HAP-1 (cell line): ENCODE measurements at regions of chr7 and their contacts with region 1.

Region 1: DNA sequence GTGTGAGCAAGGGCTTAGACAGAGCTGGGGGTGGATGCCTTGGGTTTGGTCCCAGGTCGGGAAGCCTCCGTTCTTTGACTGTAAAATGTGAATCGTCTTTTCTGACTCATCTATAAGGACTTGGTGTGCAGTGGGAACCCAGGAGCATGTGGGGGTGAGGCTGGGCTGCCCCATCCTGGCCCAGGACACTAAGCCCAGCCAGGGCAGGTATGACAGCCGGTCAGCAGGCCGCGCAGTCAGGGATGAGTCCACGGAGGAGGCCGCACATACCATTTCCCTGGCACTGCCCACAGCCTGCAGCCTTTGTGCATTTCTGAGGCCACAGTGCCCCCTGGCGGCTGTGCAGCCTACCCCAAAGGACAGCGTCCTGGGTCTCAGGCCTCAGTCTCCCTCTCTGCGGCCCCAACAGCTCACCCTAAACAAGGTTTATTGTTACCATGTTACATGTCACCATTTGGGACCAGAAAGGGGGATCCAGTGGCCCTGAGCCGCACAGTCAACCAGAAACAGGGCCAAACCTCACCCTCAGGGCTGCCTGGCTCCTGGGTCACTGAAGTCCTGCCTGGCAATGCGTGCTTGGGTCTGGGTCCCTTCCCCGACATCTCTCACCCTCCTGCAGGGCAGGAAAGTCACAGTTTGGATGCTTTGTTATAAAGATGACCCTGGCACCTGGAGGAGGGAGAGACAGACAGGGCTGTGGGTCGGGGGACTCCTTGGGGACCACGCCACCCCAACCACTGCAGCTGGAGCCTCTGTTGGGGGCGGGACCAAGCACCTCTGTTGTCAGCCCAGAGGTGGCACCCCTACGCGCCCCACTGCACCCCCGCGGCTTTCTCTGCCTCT is 14.4 kb upstream of the SH2B2 start:
- DNase-seq: peak; percentile 34 to 89
- H3K4me3 ChIP-seq: no peak overlapping the region
- H3K4me1 ChIP-seq: no peaks in the 10 kb centered on the region
- H3K27me3 ChIP-seq: no peaks in the 10 kb centered on the region

Region 2: GRCh38 chr7:101138213-101138870 is 1134.0 kb before region 1 on chr7:
- in situ Hi-C with region 1: loop called (anchors 25 kb)
- DNase-seq: peak; percentile 67 to 83
- H3K4me3 ChIP-seq: peak overlapping the region; percentile 15
- H3K4me1 ChIP-seq: peaks cover 5% of the 10 kb centered on the region; the same call in 1 of the 2 replicates
- H3K27me3 ChIP-seq: no peaks in the 10 kb centered on the region; the same call in 1 of the 2 replicates

Region 3: GRCh38 chr7:101542527-101543241 is 729.6 kb before region 1 on chr7:
- in situ Hi-C with region 1: loop called (anchors 5 kb)
- DNase-seq: peak; percentile 30 to 87
- H3K4me3 ChIP-seq: no peak overlapping the region
- H3K4me1 ChIP-seq: no peaks in the 10 kb centered on the region
- H3K27me3 ChIP-seq: no peaks in the 10 kb centered on the region

Region 4: DNA sequence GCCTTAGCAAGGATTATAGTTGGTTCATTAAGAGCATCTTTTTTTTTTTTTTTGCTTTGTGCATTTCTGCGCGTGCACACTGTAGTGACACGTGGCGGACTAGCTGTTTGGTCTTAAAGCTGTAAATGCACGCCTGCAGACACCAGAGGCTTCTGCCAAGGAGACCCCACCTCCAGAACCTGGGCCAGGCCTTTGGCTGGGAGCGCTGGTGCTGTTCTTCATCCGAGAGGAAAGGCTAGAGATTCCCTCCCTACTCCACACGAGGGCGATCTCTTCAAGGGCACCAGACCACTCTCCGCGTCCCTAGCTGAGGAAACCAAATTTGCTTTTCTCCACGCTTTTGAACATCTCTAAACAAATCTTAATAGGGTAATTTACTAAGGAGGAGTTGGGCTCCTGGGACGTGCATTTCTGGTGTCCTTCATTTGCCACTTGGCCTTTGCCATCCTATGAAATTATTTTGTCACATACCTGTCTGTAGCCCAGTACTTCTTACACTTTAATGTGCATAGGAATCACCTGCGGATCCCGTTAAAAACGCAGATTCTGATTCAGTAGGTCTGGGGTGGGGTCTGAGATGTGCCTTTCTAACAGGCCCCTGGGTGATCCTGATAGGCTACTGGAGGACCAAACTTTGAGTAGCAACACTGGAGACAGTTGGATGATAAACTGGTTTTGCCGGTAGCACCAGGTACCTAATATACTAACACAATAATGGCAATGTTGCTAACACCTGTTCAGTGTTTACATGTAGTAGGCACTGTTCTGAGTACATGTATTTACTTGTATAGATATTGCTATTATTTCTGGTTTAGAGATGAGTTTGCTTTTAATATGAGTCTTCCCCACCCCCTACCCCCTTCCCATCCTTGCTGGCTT is 1175.0 kb after region 1 on chr7:
- in situ Hi-C with region 1: no loop called
- DNase-seq: peak; percentile 73 to 78
- H3K4me3 ChIP-seq: no peak overlapping the region
- H3K4me1 ChIP-seq: no peaks in the 10 kb centered on the region
- H3K27me3 ChIP-seq: peaks cover 31% of the 10 kb centered on the region